Activated T-helper 1 cell treated with anti-CD3 and anti-CD28 coated beads, Interleukin-12 subunit alpha, Interleukin-12 subunit beta, Interleukin-2, Interleukin-4 antibody, amounts not matched to agents 30 ng/mL and 10 ng/mL and 1 ng/mL, durations not matched to agents 14 hours and 24 hours and 36 hours (primary cell): ENCODE measurements at regions of chr20 and their contacts with region 1.

Region 1: DNA sequence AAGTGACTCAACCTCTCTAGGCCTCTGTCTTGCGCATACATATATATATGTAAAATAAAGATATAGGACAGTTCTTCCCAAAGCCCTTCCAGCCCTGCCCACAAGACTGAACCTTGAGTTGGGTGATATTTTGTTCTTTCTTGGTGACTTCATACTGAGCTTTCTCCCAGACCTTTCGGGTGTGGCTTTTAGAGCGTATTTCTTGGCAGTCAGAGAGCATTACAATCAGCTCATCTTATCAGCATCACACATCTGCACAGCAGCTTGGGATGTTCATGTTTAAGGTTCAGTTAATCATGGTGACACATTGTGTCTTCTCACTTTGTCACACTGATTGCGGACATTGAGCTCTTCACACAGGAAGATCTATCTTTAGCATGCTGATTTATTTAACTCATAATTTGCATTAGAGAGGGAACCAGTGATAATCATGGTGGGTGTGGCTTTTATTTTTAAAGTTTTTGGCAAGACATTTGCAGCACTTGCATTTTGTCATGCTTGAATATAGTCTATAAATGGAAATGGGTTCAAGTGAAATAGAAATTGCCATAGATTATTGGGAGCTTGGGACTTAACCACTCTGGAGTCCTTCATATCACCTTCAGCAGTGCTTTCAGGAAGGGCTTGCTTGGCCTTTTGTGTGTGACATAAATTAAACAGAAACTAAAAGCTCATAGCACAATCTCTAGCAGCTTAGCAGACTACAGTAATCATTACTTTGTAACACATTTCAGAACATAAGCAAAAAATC is 8.3 kb downstream of the KIF3B start:
- DNase-seq: peak; percentile 41
- H3K4me3 Mint-ChIP-seq: peak overlapping the region; percentile 23
- H3K27ac Mint-ChIP-seq: peak overlapping the region; percentile 87
- H3K4me1 Mint-ChIP-seq: peaks cover 75% of the 10 kb centered on the region
- H3K27me3 Mint-ChIP-seq: no peaks in the 10 kb centered on the region

Region 2: DNA sequence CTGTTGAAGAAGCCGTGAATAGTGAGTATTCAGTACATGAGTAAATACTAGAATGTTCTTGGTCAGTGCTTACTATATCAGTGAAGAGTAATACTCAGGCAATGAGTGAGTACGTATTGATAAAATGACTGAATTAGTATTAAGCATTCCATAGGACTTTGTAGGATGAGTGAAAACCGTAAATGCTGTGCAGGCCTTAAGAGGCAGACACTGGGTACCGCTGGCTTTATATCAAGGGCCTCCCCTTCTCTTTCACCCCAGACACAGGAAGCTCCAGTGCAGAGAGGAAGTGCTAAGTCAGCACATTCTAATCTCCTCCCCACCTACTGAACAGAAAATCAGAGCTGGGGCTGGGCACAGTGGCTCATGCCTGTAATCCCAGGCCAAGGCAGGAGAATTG is 53.9 kb before region 1 on chr20:
- intact Hi-C with region 1: loop called (anchors 1 kb)
- DNase-seq: peak; percentile 31
- H3K4me3 Mint-ChIP-seq: peak overlapping the region; percentile 69
- H3K27ac Mint-ChIP-seq: peak overlapping the region; percentile 95
- H3K4me1 Mint-ChIP-seq: peaks cover 40% of the 10 kb centered on the region
- H3K27me3 Mint-ChIP-seq: no peaks in the 10 kb centered on the region

Region 3: GRCh38 chr20:32302507-32302872 is 16.7 kb after region 1 on chr20:
- intact Hi-C with region 1: loop called (anchors 2 kb)
- DNase-seq: no peak
- H3K4me3 Mint-ChIP-seq: no peak overlapping the region
- H3K27ac Mint-ChIP-seq: no peak overlapping the region
- H3K4me1 Mint-ChIP-seq: peaks cover 29% of the 10 kb centered on the region
- H3K27me3 Mint-ChIP-seq: no peaks in the 10 kb centered on the region